ENCODE measurements at regions of chr7 and their contacts with region 1.

Region 1: GRCh38 chr7:45259966-45260646 is 102.5 kb downstream of the RAMP3 start:
- DNase-seq: peak; percentile 64
- H3K4me3 ChIP-seq: no peak overlapping the region
- H3K27ac ChIP-seq: no peak overlapping the region
- H3K4me1 ChIP-seq: no peaks in the 10 kb centered on the region
- H3K27me3 ChIP-seq: no peaks in the 10 kb centered on the region
- CTCF ChIP-seq: peak; percentile 96

Region 2: DNA sequence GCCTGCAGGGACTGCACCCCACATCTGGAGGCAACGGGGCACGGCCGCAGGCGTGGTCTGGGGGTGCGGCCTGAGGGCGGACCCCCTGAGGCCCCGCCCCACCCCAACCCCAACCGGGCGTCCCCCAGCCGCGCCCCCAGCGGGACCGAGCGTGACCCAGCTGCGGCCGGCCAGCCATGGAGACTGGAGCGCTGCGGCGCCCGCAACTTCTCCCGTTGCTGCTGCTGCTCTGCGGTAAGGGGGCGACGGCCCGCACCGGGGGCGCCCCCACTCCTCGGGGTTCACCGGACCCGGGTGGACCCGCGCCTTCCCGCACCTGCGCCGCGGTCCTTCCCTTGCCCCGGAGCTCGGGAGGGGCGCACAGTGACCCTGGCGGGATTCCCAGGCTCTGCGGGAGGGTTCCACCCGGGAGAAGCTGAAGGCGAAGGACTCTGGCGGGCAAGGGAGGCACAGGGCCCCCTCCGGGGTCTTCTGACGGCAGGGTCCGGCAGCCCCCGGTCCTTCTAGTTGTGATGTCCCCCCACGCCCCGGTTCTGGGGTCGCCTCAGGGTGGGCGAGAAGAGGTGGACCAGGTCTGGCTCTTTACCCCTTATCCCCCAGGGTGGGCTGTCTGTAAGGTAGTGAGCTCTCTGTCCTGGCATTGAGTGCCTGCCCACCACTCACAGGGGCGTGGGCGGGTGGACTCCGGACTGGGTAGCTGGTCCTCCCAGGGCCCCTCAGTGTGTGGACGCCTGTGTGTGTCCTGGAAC is 102.3 kb before region 1 on chr7 and contains the start of gene RAMP3:
- intact Hi-C with region 1: loop called (anchors 2 kb)
- DNase-seq: no peak
- H3K4me3 ChIP-seq: no peak within 1 kb of the TSS
- H3K27ac ChIP-seq: no peak within 1 kb of the TSS
- H3K4me1 ChIP-seq: no peaks in the 10 kb centered on the region
- H3K27me3 ChIP-seq: peaks cover 8% of the 10 kb centered on the region
- CTCF ChIP-seq: no peak
- total RNA-seq, gene RAMP3: 7.2 to 8.5 TPM